ENCODE measurements at regions of chr2 and their contacts with region 1.

Region 1: DNA sequence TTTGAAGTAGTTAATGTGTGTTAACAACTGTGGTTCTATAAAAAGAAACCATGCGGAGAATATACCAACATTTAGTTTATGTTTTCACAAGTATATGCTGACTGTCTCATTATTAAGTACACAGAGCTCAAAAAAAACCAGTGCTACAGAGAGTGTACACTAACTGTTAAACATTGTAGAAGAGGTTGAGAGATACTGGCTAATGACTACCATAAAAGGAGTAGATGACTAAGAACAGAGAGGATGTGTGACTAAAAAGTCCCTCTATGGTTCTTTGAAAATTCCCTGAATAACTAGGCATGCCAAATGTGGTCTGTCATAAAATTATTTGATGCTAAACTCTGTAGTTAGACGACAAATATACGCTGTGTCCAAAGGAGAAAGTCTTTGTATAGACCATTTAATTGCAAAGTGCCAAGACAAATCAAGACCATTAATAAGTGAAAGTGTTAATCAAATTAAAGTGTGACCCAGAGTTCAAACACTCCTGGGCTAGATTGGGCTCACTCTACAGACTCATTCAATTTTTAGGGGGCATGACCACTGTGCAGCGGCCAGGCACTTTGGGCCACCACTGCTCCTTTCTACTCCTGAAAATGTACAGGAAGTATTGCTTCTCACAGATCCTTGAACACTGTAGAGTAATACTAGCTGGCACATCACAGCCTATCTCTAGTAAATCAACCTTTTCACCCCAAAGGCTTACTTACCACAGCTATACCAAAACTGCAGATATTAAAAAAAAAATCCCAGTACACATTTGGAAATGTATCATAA is 45.1 kb upstream of the SERTAD2 start:
- DNase-seq: peak; percentile 94
- ATAC-seq: peak; percentile 97
- H3K4me3 ChIP-seq: no peak overlapping the region
- H3K27ac ChIP-seq: peak overlapping the region; percentile 66
- H3K4me1 ChIP-seq: peaks cover 16% of the 10 kb centered on the region
- H3K27me3 ChIP-seq: no peaks in the 10 kb centered on the region
- CTCF ChIP-seq: no peak
- POLR2A ChIP-seq: no peak
- RAD21 ChIP-seq: no peak

Region 2: DNA sequence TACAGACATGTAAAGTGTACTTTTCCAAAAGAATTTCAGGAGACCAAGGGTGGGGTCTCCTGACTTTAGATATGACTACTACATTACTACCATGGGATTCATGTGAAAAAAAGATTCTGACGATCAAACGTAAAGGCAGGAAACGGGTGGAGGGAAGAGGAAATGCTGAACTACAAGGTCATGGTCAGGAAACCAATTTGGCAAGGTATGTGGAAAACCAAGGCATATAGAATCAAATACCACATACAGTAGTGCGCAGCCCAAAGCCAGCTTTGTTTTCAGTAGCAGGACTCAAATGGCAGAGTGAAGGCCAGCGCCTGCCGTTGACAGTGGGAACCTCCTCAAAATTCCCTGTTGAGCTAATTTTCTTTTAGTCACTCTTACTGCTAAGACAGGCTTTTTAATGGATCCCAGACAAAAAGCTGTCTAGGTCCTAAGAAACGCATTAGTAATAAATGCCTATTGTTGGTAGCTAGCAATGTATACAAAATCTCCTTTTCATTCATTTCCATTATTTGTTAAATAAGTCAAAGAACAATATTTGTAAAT is 12.5 kb after region 1 on chr2:
- CTCF ChIA-PET with region 1: no interaction called
- POLR2A ChIA-PET with region 1: no interaction called
- dilution Hi-C with region 1: no loop called
- in situ Hi-C with region 1: no loop called
- intact Hi-C with region 1: loop called (anchors 1 kb)
- DNase-seq: no peak
- ATAC-seq: no peak
- H3K4me3 ChIP-seq: no peak overlapping the region
- H3K27ac ChIP-seq: no peak overlapping the region
- H3K4me1 ChIP-seq: no peaks in the 10 kb centered on the region
- H3K27me3 ChIP-seq: no peaks in the 10 kb centered on the region
- CTCF ChIP-seq: no peak
- POLR2A ChIP-seq: no peak
- RAD21 ChIP-seq: no peak